Mammary epithelial cell (primary cell): ENCODE measurements at regions of chr17 and their contacts with region 1.

Region 1: DNA sequence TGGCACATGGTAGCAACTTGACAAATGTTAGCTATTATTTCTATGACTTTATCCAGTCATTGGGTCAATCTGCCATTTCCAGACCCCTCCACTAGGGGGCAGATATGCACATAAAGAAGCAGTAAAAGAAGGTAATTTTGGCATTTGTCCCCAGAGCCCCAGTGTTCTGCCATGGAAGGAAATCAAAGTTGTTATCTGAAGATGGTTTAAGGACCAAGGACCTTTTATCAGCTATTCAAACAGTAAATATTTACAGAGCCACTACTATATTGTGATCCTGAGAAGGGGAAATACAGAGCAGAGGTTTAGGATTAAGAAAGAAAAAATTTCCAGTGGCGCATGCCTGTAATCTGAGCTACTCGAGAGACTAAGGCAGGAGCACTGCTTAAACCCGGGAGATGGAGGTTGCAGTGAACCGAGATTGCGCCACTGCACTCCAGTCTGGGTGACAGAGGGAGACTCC is 20.0 kb downstream of the TRAF4 start:
- DNase-seq: peak; percentile 52
- H3K4me3 ChIP-seq: no peak overlapping the region
- H3K27ac ChIP-seq: no peak overlapping the region
- H3K4me1 ChIP-seq: peaks cover 15% of the 10 kb centered on the region
- H3K27me3 ChIP-seq: no peaks in the 10 kb centered on the region
- CTCF ChIP-seq: peak; percentile 80 to 96

Region 2: DNA sequence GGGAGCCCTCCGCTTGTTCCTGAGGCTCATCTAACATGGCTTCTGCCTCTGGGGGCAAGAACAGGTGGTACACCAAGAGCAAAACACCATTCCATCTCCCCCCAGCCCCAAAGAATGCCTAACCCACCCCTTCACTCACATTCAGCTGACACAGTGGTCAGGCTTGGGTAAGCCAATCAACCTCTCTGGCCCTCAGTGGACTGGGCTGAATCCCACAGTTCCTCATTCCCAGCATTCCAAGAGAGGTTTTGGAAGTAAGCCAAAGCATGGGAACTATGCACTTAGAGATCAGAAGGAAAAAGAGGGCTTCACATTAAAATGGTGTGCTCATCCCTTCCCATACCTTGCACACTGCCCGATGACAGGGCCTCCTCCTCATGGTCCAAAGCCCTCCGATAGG is 200.4 kb before region 1 on chr17:
- CTCF ChIA-PET with region 1: no interaction called
- dilution Hi-C with region 1: no loop called
- in situ Hi-C with region 1: no loop called
- intact Hi-C with region 1: no loop called
- DNase-seq: no peak
- H3K4me3 ChIP-seq: no peak overlapping the region
- H3K27ac ChIP-seq: no peak overlapping the region
- H3K4me1 ChIP-seq: no peaks in the 10 kb centered on the region
- H3K27me3 ChIP-seq: no peaks in the 10 kb centered on the region
- CTCF ChIP-seq: no peak

Region 3: GRCh38 chr17:28788100-28788499 is 24.3 kb after region 1 on chr17:
- CTCF ChIA-PET with region 1: no interaction called
- dilution Hi-C with region 1: no loop called
- in situ Hi-C with region 1: no loop called
- intact Hi-C with region 1: no loop called
- DNase-seq: no peak
- H3K4me3 ChIP-seq: no peak overlapping the region
- H3K27ac ChIP-seq: no peak overlapping the region
- H3K4me1 ChIP-seq: no peaks in the 10 kb centered on the region
- H3K27me3 ChIP-seq: no peaks in the 10 kb centered on the region
- CTCF ChIP-seq: no peak

Region 4: DNA sequence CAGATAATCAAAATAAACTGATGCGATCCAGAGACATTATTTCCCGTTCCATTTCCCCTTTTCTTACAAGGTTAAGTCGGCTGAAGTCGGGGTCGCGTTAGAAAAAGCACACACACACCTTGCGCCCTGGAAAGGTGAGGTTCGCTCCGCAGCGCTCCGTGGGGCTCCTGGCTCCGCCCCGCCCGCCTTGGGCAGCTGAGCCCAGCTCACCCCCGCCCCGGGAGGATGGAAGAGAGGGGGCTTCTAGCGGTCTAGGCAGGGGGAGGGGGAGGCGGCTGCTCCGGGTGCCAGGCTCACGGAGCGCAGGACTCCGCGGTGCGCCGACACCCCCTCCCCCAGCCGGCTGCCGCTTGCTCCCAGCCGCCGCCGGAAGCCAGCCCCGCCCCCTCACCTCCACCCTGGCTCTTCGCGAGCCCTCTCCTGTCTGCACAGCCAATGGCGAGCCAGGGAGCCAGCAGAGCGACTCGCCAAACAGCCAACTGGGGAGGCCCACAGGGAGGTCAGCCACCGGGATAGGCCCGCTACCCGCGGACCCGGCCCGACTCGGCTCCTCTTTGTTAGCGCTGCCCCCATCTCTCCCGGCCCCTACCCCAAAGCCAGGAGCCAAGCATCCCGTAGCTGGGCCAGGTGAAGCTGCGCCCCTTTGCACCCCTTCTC is 48.4 kb after region 1 on chr17:
- CTCF ChIA-PET with region 1: interaction called, 4 read pairs
- dilution Hi-C with region 1: no loop called
- in situ Hi-C with region 1: no loop called
- intact Hi-C with region 1: loop called (anchors 2 kb)
- DNase-seq: peak; percentile 97
- H3K4me3 ChIP-seq: peak overlapping the region; percentile 75 to 97 (median 97)
- H3K27ac ChIP-seq: peak overlapping the region; percentile 99
- H3K4me1 ChIP-seq: peaks cover 34% of the 10 kb centered on the region
- H3K27me3 ChIP-seq: no peaks in the 10 kb centered on the region
- CTCF ChIP-seq: no peak

Region 5: GRCh38 chr17:28878981-28879380 is 115.1 kb after region 1 on chr17:
- CTCF ChIA-PET with region 1: interaction called, 26 read pairs
- dilution Hi-C with region 1: no loop called
- in situ Hi-C with region 1: no loop called
- intact Hi-C with region 1: loop called (anchors 1 kb)
- DNase-seq: peak; percentile 61
- H3K4me3 ChIP-seq: no peak overlapping the region
- H3K27ac ChIP-seq: peak overlapping the region; percentile 54
- H3K4me1 ChIP-seq: peaks cover 39% of the 10 kb centered on the region
- H3K27me3 ChIP-seq: no peaks in the 10 kb centered on the region
- CTCF ChIP-seq: peak; percentile 54 to 69

Region 6: GRCh38 chr17:28902819-28903545 is 139.1 kb after region 1 on chr17 and contains the start of gene DHRS13:
- CTCF ChIA-PET with region 1: interaction called, 3 read pairs
- dilution Hi-C with region 1: no loop called
- in situ Hi-C with region 1: loop called (anchors 10 kb)
- intact Hi-C with region 1: loop called (anchors 1 kb)
- DNase-seq: peak; percentile 93
- H3K4me3 ChIP-seq: peak within 1 kb of the TSS; percentile 48 to 73 (median 59)
- H3K27ac ChIP-seq: peak within 1 kb of the TSS; percentile 14
- H3K4me1 ChIP-seq: peaks cover 16% of the 10 kb centered on the region
- H3K27me3 ChIP-seq: no peaks in the 10 kb centered on the region
- CTCF ChIP-seq: peak; percentile 79 to 85
- total RNA-seq, gene DHRS13: 2.3 to 7.3 TPM

Region 7: DNA sequence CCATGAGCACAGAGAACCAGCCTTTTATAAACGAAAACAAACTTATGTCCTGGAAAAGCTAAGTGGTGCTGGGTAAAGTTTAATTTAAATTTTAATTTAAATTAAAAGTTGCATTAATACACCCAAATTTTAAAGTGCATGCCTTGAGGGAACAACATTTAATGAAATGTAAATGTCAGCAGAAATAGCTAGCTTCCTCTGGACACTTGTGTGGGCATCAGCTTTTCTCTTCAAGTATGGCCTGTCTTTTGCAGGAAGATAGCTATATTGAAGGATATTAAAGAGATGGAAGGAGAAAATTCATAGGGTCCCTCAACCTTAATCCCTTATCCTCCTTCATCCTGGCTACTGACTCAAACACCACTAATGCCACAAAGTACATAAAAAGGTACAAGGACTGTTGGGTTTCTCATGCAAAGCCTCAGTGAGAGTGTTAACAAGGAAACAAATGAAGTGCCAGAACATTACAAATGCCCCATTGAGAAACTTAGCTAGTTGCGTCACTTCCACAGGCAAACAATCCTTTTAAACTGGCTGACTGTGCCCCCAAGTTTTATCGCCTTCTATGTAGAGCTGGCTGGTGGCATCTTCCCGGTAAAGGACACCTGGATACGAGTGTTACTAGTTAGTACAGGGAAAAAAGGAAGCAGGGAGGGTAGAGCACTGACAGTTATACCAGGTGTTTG is 173.4 kb after region 1 on chr17:
- CTCF ChIA-PET with region 1: no interaction called
- dilution Hi-C with region 1: no loop called
- in situ Hi-C with region 1: no loop called
- intact Hi-C with region 1: no loop called
- DNase-seq: peak; percentile 70
- H3K4me3 ChIP-seq: no peak overlapping the region
- H3K27ac ChIP-seq: no peak overlapping the region
- H3K4me1 ChIP-seq: peaks cover 16% of the 10 kb centered on the region
- H3K27me3 ChIP-seq: no peaks in the 10 kb centered on the region
- CTCF ChIP-seq: no peak

Region 8: DNA sequence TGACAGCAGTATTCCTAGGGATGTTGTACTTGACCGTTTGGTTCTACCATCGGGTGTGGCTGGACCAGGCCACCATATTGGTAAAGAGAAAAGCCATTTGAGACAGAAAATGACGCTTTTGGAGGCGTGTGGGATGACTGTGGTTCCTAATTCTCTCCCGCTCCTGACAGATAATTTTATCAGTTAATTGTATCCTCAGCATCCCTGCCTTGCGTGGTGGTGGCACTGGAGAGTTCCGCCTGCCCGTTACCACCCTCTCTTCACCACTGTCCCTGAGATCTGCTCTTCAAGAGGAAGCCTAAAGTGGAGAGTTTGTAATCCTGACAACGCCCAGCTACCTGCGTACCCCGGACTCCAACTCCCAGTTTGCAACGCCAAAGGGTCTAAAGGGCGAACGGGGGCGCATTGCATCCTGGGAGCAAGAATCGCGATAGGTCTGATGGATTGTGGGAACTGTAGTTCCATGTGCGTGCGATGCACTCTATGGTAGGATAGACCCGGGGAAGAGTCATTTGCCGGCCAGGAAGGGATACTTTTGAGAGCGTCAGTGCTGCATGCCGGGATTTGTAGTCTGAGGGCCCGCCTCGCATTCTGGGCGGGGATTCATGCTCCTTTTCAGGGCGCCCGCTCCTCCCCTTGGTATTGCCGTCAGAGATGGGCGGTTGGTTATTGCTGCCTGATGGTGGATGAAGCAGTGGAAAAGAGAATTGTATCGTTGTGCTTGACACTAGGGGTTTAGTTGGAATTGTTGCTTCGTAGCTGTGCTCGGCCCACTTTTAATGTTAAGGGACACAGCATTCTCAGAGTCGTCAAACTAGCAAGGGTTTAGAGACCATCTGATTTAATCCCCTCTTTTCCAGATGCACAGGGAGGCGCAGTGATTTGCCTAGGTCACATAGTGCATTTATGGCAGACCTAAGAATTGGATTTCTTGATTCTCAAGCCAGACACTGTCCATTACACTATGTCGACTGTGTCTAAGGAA is 188.4 kb after region 1 on chr17:
- CTCF ChIA-PET with region 1: interaction called, 6 read pairs
- dilution Hi-C with region 1: no loop called
- in situ Hi-C with region 1: no loop called
- intact Hi-C with region 1: loop called (anchors 5 kb)
- DNase-seq: peak; percentile 99
- H3K4me3 ChIP-seq: peak overlapping the region; percentile 64 to 80 (median 72)
- H3K27ac ChIP-seq: peak overlapping the region; percentile 91
- H3K4me1 ChIP-seq: peaks cover 11% of the 10 kb centered on the region
- H3K27me3 ChIP-seq: no peaks in the 10 kb centered on the region
- CTCF ChIP-seq: no peak